Endothelial cell of umbilical vein (primary cell): ENCODE measurements at regions of chr1 and their contacts with region 1.

Region 1: GRCh38 chr1:244319283-244320132 is 132.2 kb downstream of the ADSS2 start:
- DNase-seq: no peak
- H3K4me3 ChIP-seq: no peak overlapping the region
- H3K27ac ChIP-seq: peak overlapping the region; percentile 16
- H3K4me1 ChIP-seq: peaks cover 49% of the 10 kb centered on the region
- H3K27me3 ChIP-seq: no peaks in the 10 kb centered on the region
- CTCF ChIP-seq: no peak
- POLR2A ChIP-seq: no peak

Region 2: GRCh38 chr1:244341455-244342450 is 22.2 kb after region 1 on chr1:
- CTCF ChIA-PET with region 1: no interaction called
- POLR2A ChIA-PET with region 1: no interaction called
- dilution Hi-C with region 1: no loop called
- intact Hi-C with region 1: loop called (anchors 1 kb)
- DNase-seq: peak; percentile 93
- H3K4me3 ChIP-seq: no peak overlapping the region
- H3K27ac ChIP-seq: peak overlapping the region; percentile 56
- H3K4me1 ChIP-seq: peaks cover 16% of the 10 kb centered on the region
- H3K27me3 ChIP-seq: no peaks in the 10 kb centered on the region
- CTCF ChIP-seq: no peak
- POLR2A ChIP-seq: peak; percentile 17

Region 3: DNA sequence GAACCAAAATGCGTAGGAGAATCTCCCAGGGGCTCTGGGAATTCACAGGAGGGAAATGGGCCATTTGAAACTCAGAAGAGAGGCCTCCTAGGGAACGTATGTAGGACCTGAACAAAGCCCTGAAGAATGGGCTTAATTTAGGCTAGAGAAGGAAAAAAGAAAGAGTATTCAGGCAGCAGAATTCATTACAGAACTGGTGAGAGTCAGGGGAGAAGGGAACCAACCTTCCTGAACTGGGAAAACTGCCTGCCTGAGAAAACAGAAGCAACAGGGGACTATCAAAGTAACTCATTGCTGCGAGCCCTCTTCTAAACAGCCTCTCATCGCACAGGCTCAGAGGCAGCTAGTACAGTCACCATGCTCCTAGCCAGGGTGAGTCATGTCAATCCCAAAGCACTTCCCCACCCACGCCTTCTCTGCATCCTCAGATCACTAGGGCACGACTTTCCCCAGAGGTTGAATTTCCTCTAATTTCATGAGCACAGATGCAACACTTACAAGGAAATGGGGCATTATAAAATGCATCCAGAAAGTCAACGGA is 34.1 kb after region 1 on chr1:
- CTCF ChIA-PET with region 1: interaction called, 3 read pairs
- POLR2A ChIA-PET with region 1: no interaction called
- dilution Hi-C with region 1: no loop called
- intact Hi-C with region 1: loop called (anchors 1 kb)
- DNase-seq: peak; percentile 98
- H3K4me3 ChIP-seq: no peak overlapping the region
- H3K27ac ChIP-seq: peak overlapping the region; percentile 72
- H3K4me1 ChIP-seq: peaks cover 39% of the 10 kb centered on the region
- H3K27me3 ChIP-seq: no peaks in the 10 kb centered on the region
- CTCF ChIP-seq: no peak
- POLR2A ChIP-seq: peak; percentile 58

Region 4: GRCh38 chr1:244381878-244382565 is 62.5 kb after region 1 on chr1:
- CTCF ChIA-PET with region 1: no interaction called
- POLR2A ChIA-PET with region 1: no interaction called
- dilution Hi-C with region 1: no loop called
- intact Hi-C with region 1: loop called (anchors 2 kb)
- DNase-seq: peak; percentile 70
- H3K4me3 ChIP-seq: no peak overlapping the region
- H3K27ac ChIP-seq: no peak overlapping the region
- H3K4me1 ChIP-seq: peaks cover 7% of the 10 kb centered on the region
- H3K27me3 ChIP-seq: no peaks in the 10 kb centered on the region
- CTCF ChIP-seq: no peak
- POLR2A ChIP-seq: no peak

Region 5: GRCh38 chr1:244414543-244414942 is 95.0 kb after region 1 on chr1:
- CTCF ChIA-PET with region 1: interaction called, 11 read pairs
- POLR2A ChIA-PET with region 1: no interaction called
- dilution Hi-C with region 1: no loop called
- intact Hi-C with region 1: no loop called
- DNase-seq: peak; percentile 64
- H3K4me3 ChIP-seq: no peak overlapping the region
- H3K27ac ChIP-seq: no peak overlapping the region
- H3K4me1 ChIP-seq: no peaks in the 10 kb centered on the region
- H3K27me3 ChIP-seq: no peaks in the 10 kb centered on the region
- CTCF ChIP-seq: peak; percentile 17 to 24
- POLR2A ChIP-seq: no peak